HepG2 (cell line): ENCODE measurements at regions of chr20 and their contacts with region 1.

Region 1: GRCh38 chr20:35741892-35742740 is at the start of gene RBM39:
- DNase-seq: peak; percentile 100
- ATAC-seq: peak; percentile 90
- H3K4me3 ChIP-seq: peak within 1 kb of the TSS; percentile 90 to 92 (median 91)
- H3K27ac ChIP-seq: peak within 1 kb of the TSS; percentile 96
- H3K4me1 ChIP-seq: peaks cover 50% of the 10 kb centered on the region
- H3K27me3 ChIP-seq: no peaks in the 10 kb centered on the region; a peak in 1 of 5 replicates
- CTCF ChIP-seq: peak; percentile 70
- EP300 ChIP-seq: peak; percentile 83 to 87
- POLR2A ChIP-seq: peak; percentile 89 to 97
- RAD21 ChIP-seq: peak; percentile 66
- total RNA-seq, gene RBM39: 431 and 788 TPM in 2 replicates

Region 2: GRCh38 chr20:35447082-35447789 is 294.9 kb before region 1 on chr20:
- CTCF ChIA-PET with region 1: no interaction called
- POLR2A ChIA-PET with region 1: interaction called, 13 read pairs
- in situ Hi-C with region 1: no loop called
- intact Hi-C with region 1: no loop called
- DNase-seq: peak; percentile 92
- ATAC-seq: peak; percentile 90
- H3K4me3 ChIP-seq: peak overlapping the region; percentile 51 to 61 (median 55)
- H3K27ac ChIP-seq: no peak overlapping the region
- H3K4me1 ChIP-seq: peaks cover 8% of the 10 kb centered on the region
- H3K27me3 ChIP-seq: no peaks in the 10 kb centered on the region; a peak in 2 of 5 replicates
- CTCF ChIP-seq: peak; percentile 95
- EP300 ChIP-seq: no peak
- POLR2A ChIP-seq: peak in 1 of 2 experiments; percentile 48; a peak in 2 of 4 replicates
- RAD21 ChIP-seq: peak; percentile 75

Region 3: GRCh38 chr20:35478804-35479472 is 263.2 kb before region 1 on chr20:
- CTCF ChIA-PET with region 1: no interaction called
- POLR2A ChIA-PET with region 1: interaction called, 10 read pairs
- in situ Hi-C with region 1: no loop called
- intact Hi-C with region 1: no loop called
- DNase-seq: peak; percentile 77
- ATAC-seq: peak; percentile 84
- H3K4me3 ChIP-seq: peak overlapping the region in 1 of 3 experiments; percentile 6; a peak in 1 of 6 replicates
- H3K27ac ChIP-seq: peak overlapping the region; percentile 57
- H3K4me1 ChIP-seq: peaks cover 37% of the 10 kb centered on the region
- H3K27me3 ChIP-seq: no peaks in the 10 kb centered on the region
- CTCF ChIP-seq: peak; percentile 87
- EP300 ChIP-seq: no peak
- POLR2A ChIP-seq: no peak
- RAD21 ChIP-seq: peak; percentile 50

Region 4: DNA sequence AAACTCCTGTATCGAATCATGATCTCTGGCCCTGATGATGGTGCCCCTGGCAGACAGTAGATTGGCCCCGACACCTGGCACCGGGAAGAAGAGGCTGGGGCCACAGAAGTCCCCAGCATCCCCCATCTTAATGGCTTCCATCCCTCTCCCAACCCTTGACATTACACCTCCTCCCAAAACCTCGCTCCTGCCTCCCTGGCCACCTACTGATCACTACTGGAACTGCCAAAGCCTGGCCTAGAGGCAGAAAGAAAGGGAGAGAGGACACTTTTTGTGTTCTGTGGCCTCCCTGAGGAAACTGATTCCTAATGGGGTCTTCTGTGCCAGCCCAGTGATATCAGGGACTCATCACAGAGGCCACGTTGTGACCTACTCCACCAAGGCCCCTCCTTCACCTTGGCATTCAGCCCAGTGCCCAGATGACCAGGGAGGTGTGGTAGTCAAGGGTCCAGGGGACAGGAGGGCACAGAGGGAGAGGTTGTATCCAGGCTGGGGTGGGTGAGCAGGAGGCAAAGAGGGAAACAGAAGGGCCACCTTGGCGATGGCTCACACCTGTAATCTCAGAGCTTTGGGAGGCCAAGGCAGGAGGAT is 218.7 kb before region 1 on chr20:
- CTCF ChIA-PET with region 1: no interaction called
- POLR2A ChIA-PET with region 1: no interaction called
- in situ Hi-C with region 1: no loop called
- intact Hi-C with region 1: no loop called
- DNase-seq: peak; percentile 47
- ATAC-seq: peak; percentile 85
- H3K4me3 ChIP-seq: no peak overlapping the region
- H3K27ac ChIP-seq: no peak overlapping the region
- H3K4me1 ChIP-seq: peaks cover 28% of the 10 kb centered on the region
- H3K27me3 ChIP-seq: no peaks in the 10 kb centered on the region; a peak in 1 of 5 replicates
- CTCF ChIP-seq: peak; percentile 76
- EP300 ChIP-seq: no peak
- POLR2A ChIP-seq: no peak
- RAD21 ChIP-seq: peak; percentile 49

Region 5: DNA sequence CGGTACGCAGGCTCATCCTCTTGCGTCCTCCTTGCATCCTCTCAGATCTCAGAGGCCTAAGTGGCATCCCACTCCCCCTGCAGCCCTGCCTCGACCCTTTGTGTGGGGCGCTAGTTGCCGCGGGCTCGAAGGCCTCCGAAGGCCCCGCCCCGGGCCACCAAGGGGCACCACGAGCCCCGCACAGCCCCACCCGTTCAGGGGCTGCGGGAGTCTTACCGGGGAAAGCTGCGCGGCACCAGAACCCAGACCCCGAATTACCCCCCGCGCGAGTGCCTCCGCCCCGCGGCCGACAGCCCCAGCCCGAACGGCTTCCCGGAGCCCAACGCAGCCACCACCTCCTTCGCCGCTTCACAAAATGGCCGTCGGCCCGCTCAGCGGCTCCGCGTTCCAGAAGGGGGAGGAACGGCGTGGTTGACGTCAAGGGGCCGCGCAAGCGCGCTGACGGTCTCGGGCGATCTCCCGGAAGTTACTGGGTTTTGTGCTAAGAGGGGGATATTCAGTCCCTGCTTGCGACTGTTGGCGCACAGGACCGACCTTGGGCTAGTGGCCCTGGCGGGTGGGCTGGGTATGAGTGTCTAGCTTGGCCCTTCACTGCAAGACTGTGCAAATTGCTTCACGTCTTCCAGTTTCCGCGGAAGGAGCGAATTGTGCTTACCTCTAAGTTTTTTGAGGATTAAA is 77.4 kb before region 1 on chr20 and contains the starts of genes CPNE1 and RBM12:
- CTCF ChIA-PET with region 1: no interaction called
- POLR2A ChIA-PET with region 1: interaction called, 73 read pairs
- in situ Hi-C with region 1: no loop called
- intact Hi-C with region 1: no loop called
- DNase-seq: peak; percentile 96
- ATAC-seq: peak; percentile 92
- H3K4me3 ChIP-seq: peak within 1 kb of the TSS; percentile 76 to 99 (median 79)
- H3K27ac ChIP-seq: peak within 1 kb of the TSS; percentile 90
- H3K4me1 ChIP-seq: peaks cover 41% of the 10 kb centered on the region
- H3K27me3 ChIP-seq: no peaks in the 10 kb centered on the region; a peak in 1 of 5 replicates
- CTCF ChIP-seq: peak; percentile 30; the same call in 1 of the 2 replicates
- EP300 ChIP-seq: no peak; a peak in 1 of 4 replicates
- POLR2A ChIP-seq: peak; percentile 96 to 99
- RAD21 ChIP-seq: peak; percentile 71
- total RNA-seq, gene CPNE1: 431 and 439 TPM in 2 replicates
- total RNA-seq, gene RBM12: 104 and 111 TPM in 2 replicates

Region 6: DNA sequence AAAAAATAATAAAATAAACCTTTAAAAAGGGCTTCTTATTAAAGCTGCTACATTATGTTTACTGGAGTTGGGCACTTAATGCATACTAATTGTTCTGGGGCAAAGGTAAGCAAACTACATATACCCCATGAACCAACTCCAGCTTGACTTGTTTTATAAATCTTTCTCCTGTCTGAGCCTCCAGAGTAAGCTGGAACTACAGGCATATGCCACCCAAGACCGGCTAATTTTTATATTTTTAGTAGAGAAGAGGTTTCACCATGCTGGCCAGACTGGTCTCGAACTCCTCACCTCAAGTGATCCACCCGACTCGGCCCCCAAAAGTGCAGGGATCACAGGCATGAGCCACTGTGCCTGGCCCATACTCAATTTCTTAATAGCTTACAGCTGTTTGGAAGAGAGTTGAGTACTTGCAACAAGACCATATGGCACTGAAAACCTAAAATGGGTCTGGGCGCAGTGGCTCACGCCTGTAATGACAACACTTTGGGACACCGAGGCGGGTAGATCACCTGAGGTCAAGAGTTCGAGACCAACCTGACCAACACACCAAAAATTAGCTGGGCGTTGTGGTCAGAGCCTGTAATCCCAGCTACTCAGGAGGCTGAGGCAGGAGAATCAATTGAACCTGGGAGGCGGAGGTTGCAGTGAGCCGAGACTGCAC is 23.0 kb before region 1 on chr20:
- CTCF ChIA-PET with region 1: no interaction called
- POLR2A ChIA-PET with region 1: interaction called, 38 read pairs
- in situ Hi-C with region 1: no loop called
- intact Hi-C with region 1: no loop called
- DNase-seq: no peak
- ATAC-seq: peak; percentile 1; the same call in 2 of the 3 replicates
- H3K4me3 ChIP-seq: no peak overlapping the region
- H3K27ac ChIP-seq: no peak overlapping the region
- H3K4me1 ChIP-seq: 0 out of 2 replicates have a peak, but pooled peaks cover 5% of the 10 kb centered on the region
- H3K27me3 ChIP-seq: no peaks in the 10 kb centered on the region
- CTCF ChIP-seq: no peak
- EP300 ChIP-seq: no peak
- POLR2A ChIP-seq: no peak; a peak in 1 of 4 replicates
- RAD21 ChIP-seq: no peak

Region 7: DNA sequence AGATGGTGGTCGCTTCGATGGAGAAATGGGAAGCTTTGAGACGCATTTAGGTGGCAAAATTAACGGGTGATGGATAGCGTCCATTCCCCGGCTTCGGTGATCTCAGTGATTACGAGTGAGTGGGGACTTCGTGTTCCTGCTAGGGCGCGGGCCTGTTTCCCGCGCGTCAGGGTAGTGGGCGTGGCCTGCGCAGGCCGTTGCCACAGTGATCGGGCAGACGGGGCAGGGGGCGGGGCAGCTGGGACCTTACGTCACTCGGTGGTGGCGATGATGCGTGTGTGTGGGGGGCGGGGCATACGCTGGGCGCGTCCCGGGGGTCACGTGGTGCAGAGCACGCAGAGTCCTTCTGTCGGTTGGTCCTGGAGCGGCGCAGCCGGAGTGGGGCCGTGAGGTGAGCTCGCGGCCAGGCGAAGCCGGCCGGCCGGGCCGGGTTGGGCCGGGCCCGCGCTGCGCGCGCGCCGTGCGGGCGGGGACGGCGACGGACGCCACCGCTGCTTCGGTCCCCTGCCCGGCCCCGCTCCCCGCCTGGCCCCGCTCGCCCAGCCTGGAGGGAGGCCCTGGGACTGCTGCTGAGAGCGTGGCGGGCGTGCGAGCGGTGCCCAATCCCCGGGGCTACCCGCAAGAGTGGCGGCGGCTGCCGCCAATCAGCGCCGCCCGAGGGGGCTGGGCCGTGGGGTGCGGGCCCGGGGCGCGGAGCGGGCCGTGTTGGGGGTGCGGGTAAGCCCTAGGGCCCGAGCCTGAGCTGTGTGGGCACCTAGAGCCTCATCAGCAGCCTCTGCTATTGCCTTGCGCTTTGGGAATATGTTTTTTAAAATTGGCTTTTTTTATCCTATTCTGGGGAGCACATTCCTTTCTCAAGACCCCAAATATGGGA is 29.8 kb after region 1 on chr20 and contains the start of gene PHF20:
- CTCF ChIA-PET with region 1: no interaction called
- POLR2A ChIA-PET with region 1: interaction called, 461 read pairs
- in situ Hi-C with region 1: no loop called
- intact Hi-C with region 1: loop called (anchors 1 kb)
- DNase-seq: peak; percentile 93
- ATAC-seq: peak; percentile 97
- H3K4me3 ChIP-seq: peak within 1 kb of the TSS; percentile 76 to 85 (median 81)
- H3K27ac ChIP-seq: peak within 1 kb of the TSS; percentile 46
- H3K4me1 ChIP-seq: peaks cover 68% of the 10 kb centered on the region
- H3K27me3 ChIP-seq: no peaks in the 10 kb centered on the region; a peak in 1 of 5 replicates
- CTCF ChIP-seq: 0 out of 2 replicates have a peak, but pooled peaks have one; percentile 16
- EP300 ChIP-seq: no peak
- POLR2A ChIP-seq: peak; percentile 86 to 89
- RAD21 ChIP-seq: peak; percentile 79; the same call in 1 of the 2 replicates
- total RNA-seq, gene PHF20: 34.1 and 43.3 TPM in 2 replicates

Region 8: DNA sequence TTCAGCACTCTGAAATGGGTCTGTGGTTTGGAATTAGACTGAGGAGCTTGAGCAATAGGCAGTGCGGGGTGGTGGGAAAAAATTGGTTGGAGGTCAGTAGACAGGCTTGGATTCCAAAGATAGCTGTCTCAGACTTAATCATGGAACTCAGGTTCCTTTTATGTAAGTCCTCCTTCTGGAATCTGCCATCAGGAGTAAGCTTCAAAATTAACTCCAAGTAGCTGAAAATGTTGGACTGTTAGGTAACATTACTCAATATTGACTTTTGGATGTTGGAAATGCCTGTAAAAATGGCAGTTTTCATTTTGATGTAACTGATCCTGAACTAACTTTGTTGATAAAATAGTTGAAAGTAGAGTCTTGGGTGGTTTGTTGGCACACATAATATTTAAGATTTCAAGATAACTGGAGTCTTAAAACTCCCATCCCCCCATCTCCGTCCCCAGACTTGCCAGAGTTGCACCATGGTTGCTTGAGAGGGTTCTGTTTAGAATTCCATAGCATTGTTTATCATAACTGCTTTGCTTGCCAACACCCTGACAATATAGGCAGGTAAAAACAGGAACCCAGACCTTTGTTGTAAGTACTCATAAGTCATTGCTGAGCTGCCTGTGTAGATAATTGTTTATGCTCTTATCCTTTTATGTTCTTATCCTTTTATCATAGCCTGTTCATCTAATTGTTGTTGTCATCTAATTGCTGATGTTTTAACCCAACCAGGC is 112.8 kb after region 1 on chr20:
- CTCF ChIA-PET with region 1: no interaction called
- POLR2A ChIA-PET with region 1: interaction called, 11 read pairs
- in situ Hi-C with region 1: no loop called
- intact Hi-C with region 1: no loop called
- DNase-seq: no peak
- ATAC-seq: no peak
- H3K4me3 ChIP-seq: no peak overlapping the region
- H3K27ac ChIP-seq: no peak overlapping the region
- H3K4me1 ChIP-seq: peaks cover 10% of the 10 kb centered on the region
- H3K27me3 ChIP-seq: no peaks in the 10 kb centered on the region
- CTCF ChIP-seq: no peak
- EP300 ChIP-seq: no peak
- POLR2A ChIP-seq: no peak
- RAD21 ChIP-seq: no peak